ENCODE measurements at regions of chr10 and their contacts with region 1.

Region 1: GRCh38 chr10:51590802-51591201 is 108.6 kb downstream of the CSTF2T start:
- DNase-seq: no peak
- ATAC-seq: no peak
- H3K4me3 ChIP-seq: no peak overlapping the region
- H3K4me3 Mint-ChIP-seq: no peak overlapping the region
- H3K27ac ChIP-seq: no peak overlapping the region
- H3K27ac Mint-ChIP-seq: no peak overlapping the region
- H3K4me1 ChIP-seq: no peaks in the 10 kb centered on the region
- H3K4me1 Mint-ChIP-seq: no peaks in the 10 kb centered on the region
- H3K27me3 ChIP-seq: no peaks in the 10 kb centered on the region
- H3K27me3 Mint-ChIP-seq: no peaks in the 10 kb centered on the region

Region 2: DNA sequence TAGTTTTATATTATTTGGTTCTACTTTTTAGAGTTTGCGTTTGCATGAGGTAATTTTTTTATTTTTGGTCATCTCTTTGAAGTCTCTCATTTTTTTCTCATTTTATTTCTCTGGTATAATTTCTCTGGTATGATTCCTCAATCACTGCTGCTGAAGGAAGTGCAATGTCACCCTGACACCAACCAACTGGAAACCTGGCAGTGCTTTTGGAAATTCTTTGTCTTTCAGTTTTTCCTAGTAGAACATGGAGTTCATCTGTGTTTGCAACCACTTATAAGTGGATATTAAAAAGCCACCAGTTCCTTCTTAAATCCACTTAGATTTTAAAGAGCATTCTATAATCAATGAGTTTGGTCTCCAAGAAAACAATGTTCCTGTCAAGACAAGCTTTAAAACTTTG is 224.8 kb before region 1 on chr10:
- CTCF ChIA-PET with region 1: interaction called in 1 of 2 experiments, 13 read pairs
- POLR2A ChIA-PET with region 1: no interaction called
- DNase-seq: no peak
- ATAC-seq: no peak
- H3K4me3 ChIP-seq: no peak overlapping the region
- H3K4me3 Mint-ChIP-seq: no peak overlapping the region
- H3K27ac ChIP-seq: no peak overlapping the region
- H3K27ac Mint-ChIP-seq: no peak overlapping the region
- H3K4me1 ChIP-seq: no peaks in the 10 kb centered on the region
- H3K4me1 Mint-ChIP-seq: no peaks in the 10 kb centered on the region
- H3K27me3 ChIP-seq: no peaks in the 10 kb centered on the region
- H3K27me3 Mint-ChIP-seq: no peaks in the 10 kb centered on the region

Region 3: DNA sequence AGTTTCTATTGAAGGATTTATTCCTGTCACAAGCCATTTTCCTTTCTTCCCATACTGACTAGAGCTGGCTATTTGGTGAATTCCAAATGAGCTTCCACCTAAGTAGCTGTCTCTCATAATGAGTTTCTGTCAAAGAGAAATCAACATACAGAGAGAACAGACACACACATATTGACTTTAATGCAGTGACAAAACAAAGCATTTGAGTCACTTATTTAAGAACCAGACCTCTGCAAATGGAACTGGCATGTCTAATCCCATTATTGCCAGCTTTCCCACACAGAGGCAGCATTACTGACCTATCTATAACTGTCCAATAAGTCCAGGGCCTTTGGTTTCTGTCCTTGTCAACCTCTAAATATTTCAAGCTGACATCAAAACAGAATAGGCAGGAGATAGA is 287.9 kb after region 1 on chr10:
- CTCF ChIA-PET with region 1: no interaction called
- POLR2A ChIA-PET with region 1: no interaction called
- DNase-seq: no peak
- ATAC-seq: no peak
- H3K4me3 ChIP-seq: no peak overlapping the region
- H3K4me3 Mint-ChIP-seq: peak overlapping the region; percentile 10 to 46 (median 43)
- H3K27ac ChIP-seq: no peak overlapping the region
- H3K27ac Mint-ChIP-seq: peak overlapping the region in 1 of 2 donors; percentile 94
- H3K4me1 ChIP-seq: no peaks in the 10 kb centered on the region
- H3K4me1 Mint-ChIP-seq: peaks cover 11 to 16% (median 16%) of the 10 kb centered on the region in 3 donors
- H3K27me3 ChIP-seq: no peaks in the 10 kb centered on the region
- H3K27me3 Mint-ChIP-seq: peaks cover 0 to 7% of the 10 kb centered on the region in 2 donors

Measured in T-cell (primary cell).